AG04449 (cell line): ENCODE measurements at regions of chr1 and their contacts with region 1.

Region 1: DNA sequence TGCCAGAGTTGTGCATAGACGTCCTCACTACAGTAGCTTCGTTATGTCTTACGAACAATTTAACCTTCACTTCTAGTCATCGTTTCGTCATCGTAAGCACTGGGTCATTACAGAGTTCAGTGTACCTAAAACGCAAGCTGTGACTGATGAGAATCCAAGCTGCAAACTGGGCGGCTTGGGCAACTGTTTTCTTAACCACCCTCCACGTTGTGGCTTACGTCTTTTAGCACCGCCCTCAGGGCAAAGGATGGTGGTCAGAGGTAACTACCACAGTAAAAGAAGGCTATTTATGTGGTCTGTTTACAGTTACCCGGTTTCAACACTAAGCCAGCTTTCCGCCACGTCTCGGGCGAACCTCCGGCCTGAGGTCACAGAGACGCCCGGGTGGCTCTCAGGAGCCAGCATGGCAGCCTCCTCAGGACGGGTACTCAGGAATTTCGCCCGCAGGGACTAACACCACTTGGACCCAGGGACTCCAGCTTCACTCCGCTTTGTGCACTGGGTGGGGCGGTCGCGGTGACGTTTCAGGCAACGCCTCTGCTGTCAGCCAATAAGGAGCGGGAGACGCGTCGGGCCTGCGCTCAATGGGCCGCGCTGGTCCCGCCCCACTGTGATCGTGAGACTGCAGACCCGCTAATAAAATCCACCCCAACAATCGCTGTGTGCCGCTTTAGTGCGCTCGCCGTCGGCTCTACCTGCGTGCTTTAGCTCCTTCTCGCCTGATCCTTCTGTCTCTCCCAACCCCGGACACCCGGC is at the start of gene CTH:
- DNase-seq: peak; percentile 71
- H3K4me3 ChIP-seq: peak within 1 kb of the TSS; percentile 70
- CTCF ChIP-seq: no peak

Region 2: GRCh38 chr1:70354332-70355110 is 56.3 kb before region 1 on chr1 and contains the start of gene ANKRD13C:
- CTCF ChIA-PET with region 1: interaction called, 7 read pairs
- POLR2A ChIA-PET with region 1: interaction called, 31 read pairs
- DNase-seq: peak; percentile 78
- H3K4me3 ChIP-seq: peak within 1 kb of the TSS; percentile 99
- CTCF ChIP-seq: peak; percentile 20

Region 3: DNA sequence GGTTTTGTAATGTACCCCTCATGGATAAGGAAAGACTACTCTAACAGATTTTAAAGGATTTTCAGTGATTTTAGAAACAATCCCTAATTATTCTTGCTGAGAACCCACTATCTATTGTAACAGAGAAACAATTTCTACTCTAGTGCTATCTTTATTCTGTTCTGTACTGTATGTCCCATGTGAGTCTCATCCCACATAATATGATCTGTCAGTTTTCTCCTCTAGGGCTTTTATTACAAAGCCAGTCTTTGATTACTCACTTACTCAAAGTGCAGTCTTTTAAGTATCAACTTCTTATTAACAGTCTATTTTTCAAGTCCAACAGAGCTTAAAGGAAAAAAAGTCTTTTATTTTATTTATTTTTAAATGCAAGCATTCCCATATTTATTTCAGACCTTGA is 55.1 kb after region 1 on chr1:
- CTCF ChIA-PET with region 1: no interaction called
- POLR2A ChIA-PET with region 1: no interaction called
- DNase-seq: no peak
- H3K4me3 ChIP-seq: no peak overlapping the region
- CTCF ChIP-seq: no peak

Region 4: GRCh38 chr1:70571191-70571590 is 160.4 kb after region 1 on chr1:
- CTCF ChIA-PET with region 1: no interaction called
- POLR2A ChIA-PET with region 1: no interaction called
- DNase-seq: no peak
- H3K4me3 ChIP-seq: no peak overlapping the region
- CTCF ChIP-seq: no peak